ENCODE measurements at regions of chr15 and their contacts with region 1.

Region 1: DNA sequence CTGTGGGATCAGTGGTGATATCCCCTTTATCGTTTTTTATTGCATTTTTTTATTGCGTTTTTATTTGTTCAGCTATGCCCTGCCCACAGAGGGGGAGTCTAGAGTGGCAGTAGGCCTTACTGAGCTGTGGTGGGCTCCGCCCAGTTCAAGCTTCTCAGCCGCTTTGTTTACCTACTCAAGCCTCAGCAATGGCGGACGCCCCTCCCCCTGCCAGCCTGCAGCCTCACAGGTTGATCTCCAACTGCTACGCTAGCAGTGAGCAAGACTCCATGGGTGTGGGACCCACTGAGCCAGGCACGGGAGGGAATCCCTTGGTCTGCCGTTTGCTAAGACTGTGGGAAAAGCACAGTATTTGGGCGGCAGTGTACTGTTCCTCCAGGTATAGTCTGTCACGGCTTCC is 500.6 kb upstream of the MCTP2 start:
- DNase-seq: no peak
- ATAC-seq: no peak
- H3K4me3 ChIP-seq: no peak overlapping the region
- H3K27ac ChIP-seq: no peak overlapping the region
- H3K4me1 ChIP-seq: no peaks in the 10 kb centered on the region
- H3K27me3 ChIP-seq: no peaks in the 10 kb centered on the region
- CTCF ChIP-seq: no peak

Region 2: GRCh38 chr15:93664213-93664956 is 66.3 kb before region 1 on chr15:
- intact Hi-C with region 1: loop called in 1 of 2 experiments (anchors 2 kb)
- DNase-seq: no peak
- ATAC-seq: no peak
- H3K4me3 ChIP-seq: no peak overlapping the region
- H3K27ac ChIP-seq: no peak overlapping the region
- H3K4me1 ChIP-seq: no peaks in the 10 kb centered on the region
- H3K27me3 ChIP-seq: no peaks in the 10 kb centered on the region
- CTCF ChIP-seq: no peak

Measured in psoas muscle (tissue), 8 donors.